Calu3 (cell line): ENCODE measurements at regions of chr5 and their contacts with region 1.

Region 1: GRCh38 chr5:171162602-171163001 is 146.4 kb upstream of the TLX3 start:
- DNase-seq: peak; percentile 56
- H3K4me3 Mint-ChIP-seq: no peak overlapping the region
- H3K27ac Mint-ChIP-seq: no peak overlapping the region
- H3K4me1 Mint-ChIP-seq: peaks cover 8% of the 10 kb centered on the region
- H3K27me3 Mint-ChIP-seq: no peaks in the 10 kb centered on the region
- CTCF ChIP-seq: peak; percentile 53

Region 2: DNA sequence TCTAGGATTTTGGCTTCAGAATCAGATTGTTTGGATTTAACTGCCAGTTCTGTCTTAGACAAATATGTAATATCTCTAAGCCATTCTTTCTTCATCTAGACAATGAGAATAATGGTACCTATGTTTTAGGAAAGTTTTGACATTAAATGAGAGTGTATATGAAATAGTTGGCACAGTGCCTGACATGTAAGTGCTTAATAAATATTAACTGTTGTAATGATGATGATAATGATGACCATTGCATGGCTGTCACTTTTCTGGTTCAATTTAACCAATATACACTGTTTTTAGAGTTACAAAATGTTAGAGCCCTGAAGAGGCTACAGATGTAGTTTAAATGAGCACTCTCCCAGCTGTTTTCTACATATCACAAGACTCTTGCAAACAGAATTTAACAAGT is 169.1 kb before region 1 on chr5:
- CTCF ChIA-PET with region 1: no interaction called
- intact Hi-C with region 1: loop called (anchors 5 kb)
- DNase-seq: no peak
- H3K4me3 Mint-ChIP-seq: no peak overlapping the region
- H3K27ac Mint-ChIP-seq: no peak overlapping the region
- H3K4me1 Mint-ChIP-seq: no peaks in the 10 kb centered on the region
- H3K27me3 Mint-ChIP-seq: no peaks in the 10 kb centered on the region
- CTCF ChIP-seq: no peak